ENCODE measurements at regions of chr9 and their contacts with region 1.

Region 1: DNA sequence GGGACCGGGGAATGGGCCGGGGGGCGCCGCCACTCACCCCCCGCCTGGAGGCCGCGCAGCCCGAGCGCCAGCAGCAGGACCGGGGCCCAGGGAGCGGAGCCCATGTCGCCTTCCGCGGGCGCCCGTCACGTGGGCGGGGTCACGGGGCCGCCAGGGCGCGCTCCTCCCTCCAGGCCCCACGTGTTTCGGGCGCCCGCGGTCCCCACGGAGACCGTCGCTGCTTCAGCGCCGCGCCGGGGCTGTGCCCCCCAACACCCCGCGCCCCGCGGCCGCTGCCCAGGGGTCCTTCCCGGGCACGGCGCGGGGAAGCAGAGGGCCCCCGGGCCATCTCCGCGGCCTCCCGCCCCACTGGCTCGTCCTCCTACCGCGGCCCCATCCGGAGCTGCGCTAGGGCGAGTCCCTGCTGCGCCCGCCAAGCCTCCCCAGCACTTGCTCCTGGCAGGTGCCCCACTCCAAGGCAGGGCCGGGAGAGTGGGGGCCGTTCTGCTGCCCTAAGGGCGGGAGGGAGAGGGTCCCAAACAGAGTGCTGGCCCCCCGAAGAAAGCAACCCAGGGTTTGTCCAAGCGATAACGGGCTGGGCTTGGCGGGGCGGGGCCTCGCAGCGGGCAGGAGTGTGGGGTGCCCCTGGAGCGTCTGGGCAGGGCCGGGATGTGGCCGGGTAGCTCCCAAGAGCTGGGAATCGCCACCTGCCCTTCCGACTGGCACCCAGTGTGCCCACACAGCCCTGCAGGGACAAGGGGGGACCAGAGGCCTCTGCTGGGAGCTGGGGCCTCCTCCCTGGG is at the start of gene DPP7:
- DNase-seq: peak; percentile 96
- H3K4me3 Mint-ChIP-seq: peak within 1 kb of the TSS; percentile 83
- H3K27ac Mint-ChIP-seq: peak within 1 kb of the TSS; percentile 78
- H3K4me1 Mint-ChIP-seq: peaks cover 8% of the 10 kb centered on the region
- H3K27me3 Mint-ChIP-seq: no peaks in the 10 kb centered on the region
- total RNA-seq, gene DPP7: 365 and 375 TPM in 2 replicates

Region 2: DNA sequence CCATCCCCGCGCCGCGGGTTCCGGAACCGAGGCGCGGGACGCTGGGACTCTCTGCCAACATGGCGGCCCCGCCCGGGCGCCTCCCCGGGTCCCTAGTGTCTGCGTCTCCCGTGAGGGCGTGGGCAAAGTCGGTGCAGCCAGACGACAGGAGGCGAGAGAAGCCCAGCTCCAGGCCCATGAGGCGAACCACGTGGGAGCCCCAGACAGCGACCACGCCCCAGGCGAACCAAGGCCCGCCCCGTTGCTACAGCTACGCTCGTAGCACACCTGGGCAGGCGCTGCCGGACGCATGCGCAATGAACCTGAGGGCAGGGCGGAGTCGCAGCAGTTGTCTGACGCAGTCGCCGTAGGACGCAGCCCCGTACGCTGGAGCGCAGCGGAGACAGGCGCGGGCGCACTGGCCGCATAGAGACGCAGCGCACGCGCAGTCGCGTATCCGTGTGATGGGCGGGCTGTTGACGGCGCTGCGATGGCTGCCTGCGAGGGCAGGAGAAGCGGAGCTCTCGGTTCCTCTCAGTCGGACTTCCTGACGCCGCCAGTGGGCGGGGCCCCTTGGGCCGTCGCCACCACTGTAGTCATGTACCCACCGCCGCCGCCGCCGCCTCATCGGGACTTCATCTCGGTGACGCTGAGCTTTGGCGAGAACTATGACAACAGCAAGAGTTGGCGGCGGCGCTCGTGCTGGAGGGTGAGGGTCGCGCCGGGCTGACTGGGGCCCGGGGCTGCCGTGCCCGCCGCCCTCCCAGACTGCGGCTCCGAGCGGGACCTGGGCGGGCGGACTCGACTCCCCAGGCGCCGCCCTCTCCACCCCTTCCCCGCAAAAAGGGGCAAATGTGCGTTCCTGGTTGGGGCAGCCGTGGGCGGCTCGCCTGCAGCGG is 28.0 kb before region 1 on chr9 and contains the start of gene MAN1B1:
- intact Hi-C with region 1: loop called (anchors 2 kb)
- DNase-seq: peak; percentile 100
- H3K4me3 Mint-ChIP-seq: peak within 1 kb of the TSS; percentile 94
- H3K27ac Mint-ChIP-seq: peak within 1 kb of the TSS; percentile 98
- H3K4me1 Mint-ChIP-seq: peaks cover 35% of the 10 kb centered on the region
- H3K27me3 Mint-ChIP-seq: peaks cover 3% of the 10 kb centered on the region
- total RNA-seq, gene MAN1B1: 49.7 and 50.1 TPM in 2 replicates

Region 3: GRCh38 chr9:137095664-137096517 is 18.9 kb before region 1 on chr9:
- intact Hi-C with region 1: loop called (anchors 1 kb)
- DNase-seq: peak; percentile 96
- H3K4me3 Mint-ChIP-seq: peak overlapping the region; percentile 78
- H3K27ac Mint-ChIP-seq: peak overlapping the region; percentile 91
- H3K4me1 Mint-ChIP-seq: peaks cover 17% of the 10 kb centered on the region
- H3K27me3 Mint-ChIP-seq: no peaks in the 10 kb centered on the region